ENCODE measurements at regions of chr16 and their contacts with region 1.

Region 1: DNA sequence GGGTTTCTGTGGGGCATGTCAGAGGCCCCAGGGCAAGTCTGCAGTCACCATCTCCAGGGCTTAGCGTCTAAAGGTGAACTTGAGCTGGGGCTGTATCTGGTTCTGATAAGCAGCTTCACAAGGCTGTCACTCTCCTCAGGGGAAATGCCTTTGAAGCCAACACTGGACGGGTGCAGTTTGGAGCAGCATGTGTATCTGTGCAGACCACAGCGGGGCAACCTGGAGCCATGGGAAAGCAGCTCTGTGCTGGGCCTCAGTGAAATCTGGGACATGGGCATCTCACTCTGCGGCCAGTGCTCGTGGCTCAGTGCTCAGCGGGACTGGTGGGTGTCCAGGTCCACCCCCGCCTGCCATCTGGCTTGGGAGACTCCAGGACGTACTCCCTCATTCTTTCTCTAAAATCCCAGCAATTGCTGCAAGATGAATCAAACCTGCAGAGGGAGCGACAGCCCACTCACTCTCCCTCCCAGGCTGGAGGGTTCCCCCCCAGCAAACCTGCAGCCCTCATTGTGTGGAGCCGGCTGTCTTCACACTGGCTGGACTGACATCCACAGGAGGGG is 63.5 kb downstream of the PRMT7 start:
- DNase-seq: no peak
- H3K4me3 ChIP-seq: no peak overlapping the region
- H3K27ac ChIP-seq: no peak overlapping the region
- H3K4me1 ChIP-seq: peaks cover 0 to 2% (median under 1%) of the 10 kb centered on the region in 4 experiments; a peak in 3 of 7 replicates
- H3K27me3 ChIP-seq: peaks cover 0 to 2% (median 0%) of the 10 kb centered on the region in 4 experiments; a peak in 2 of 7 replicates
- CTCF ChIP-seq: no peak
- EP300 ChIP-seq: no peak
- POLR2A ChIP-seq: no peak
- RAD21 ChIP-seq: no peak

Region 2: DNA sequence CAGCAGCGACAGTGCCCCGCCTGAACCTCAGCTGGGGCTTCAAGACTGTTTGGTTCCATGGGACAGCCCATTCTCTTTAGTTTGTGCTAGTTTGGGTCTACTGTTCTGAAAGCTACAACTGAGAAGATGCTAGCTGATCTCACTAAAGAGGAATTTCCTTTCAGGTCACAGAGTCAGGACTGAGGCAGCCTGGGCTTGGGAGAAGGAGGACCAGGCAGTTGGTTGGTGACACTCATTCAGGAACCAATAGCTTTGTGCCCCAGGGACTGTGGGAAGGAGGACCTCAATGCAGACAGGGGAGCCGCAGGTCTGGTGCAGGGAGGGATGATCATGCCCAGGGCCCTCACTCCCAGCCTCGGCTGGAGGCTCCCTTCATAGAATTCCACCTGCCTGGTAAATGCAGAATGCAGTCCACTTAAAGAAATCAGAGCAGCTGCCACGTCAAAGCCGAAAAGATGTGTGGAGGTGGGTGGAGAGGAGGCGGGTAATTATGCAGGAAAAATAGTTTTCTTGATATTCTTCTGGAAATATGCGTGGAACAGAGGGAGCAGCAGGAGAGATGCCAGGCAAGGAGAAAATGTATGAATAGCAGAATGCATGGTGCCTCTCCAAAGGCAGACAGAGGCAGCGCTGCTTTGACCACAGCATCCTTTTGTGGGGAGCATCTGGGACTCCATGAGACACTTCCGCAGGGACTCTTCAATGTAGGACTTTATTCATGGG is 132.2 kb after region 1 on chr16:
- CTCF ChIA-PET with region 1: interaction called, 136 read pairs
- POLR2A ChIA-PET with region 1: no interaction called
- DNase-seq: no peak
- H3K4me3 ChIP-seq: no peak overlapping the region
- H3K27ac ChIP-seq: no peak overlapping the region
- H3K4me1 ChIP-seq: no peaks in the 10 kb centered on the region
- H3K27me3 ChIP-seq: peaks cover 0 to 3% (median 1%) of the 10 kb centered on the region in 4 experiments; a peak in 2 of 7 replicates
- CTCF ChIP-seq: no peak
- EP300 ChIP-seq: no peak
- POLR2A ChIP-seq: no peak
- RAD21 ChIP-seq: no peak